ENCODE measurements at regions of chr16 and their contacts with region 1.

Region 1: DNA sequence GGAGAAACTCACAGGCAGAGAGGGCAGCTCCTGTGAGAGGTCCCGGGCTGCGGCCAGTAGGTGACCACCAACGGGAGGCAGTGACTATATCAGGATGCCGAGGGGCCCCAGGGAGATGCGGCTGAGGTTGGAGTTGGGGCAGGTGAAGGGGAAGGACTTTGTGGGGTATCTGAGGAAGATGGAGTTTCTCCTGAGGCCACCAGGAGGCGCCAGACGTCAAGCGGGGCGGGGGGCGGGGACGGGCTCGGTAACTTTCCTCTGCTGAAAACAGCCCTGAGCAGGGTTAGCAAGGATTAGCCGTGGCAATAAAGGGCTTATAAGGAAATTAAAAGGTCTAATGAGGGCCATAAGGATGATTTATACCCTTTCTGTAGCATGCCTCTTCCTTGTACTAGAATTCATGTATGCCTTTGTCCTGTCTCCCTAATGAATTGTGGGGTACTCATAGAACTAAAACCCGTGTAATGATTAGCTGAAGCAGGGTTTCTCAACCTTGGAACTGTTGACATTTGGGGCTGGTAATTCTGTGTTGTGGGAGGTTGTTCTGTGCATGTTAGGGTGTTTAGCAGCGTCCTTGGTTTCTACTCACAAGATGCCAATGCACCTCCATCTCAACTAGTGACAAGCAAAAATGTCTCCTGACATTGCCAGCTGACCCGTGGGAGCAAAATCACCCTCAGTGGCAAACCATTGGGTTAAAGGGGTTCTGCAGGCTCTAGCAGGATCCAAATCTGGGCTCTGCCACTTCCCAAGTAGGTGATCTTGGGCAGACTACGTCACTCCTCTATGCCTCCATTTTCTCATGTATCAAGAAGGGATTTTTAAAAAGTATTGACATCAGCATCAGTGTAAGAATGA is 74.8 kb upstream of the GRIN2A start:
- DNase-seq: peak; percentile 46
- H3K4me3 Mint-ChIP-seq: no peak overlapping the region
- H3K27ac Mint-ChIP-seq: no peak overlapping the region
- H3K4me1 Mint-ChIP-seq: peaks cover 11% of the 10 kb centered on the region
- H3K27me3 Mint-ChIP-seq: no peaks in the 10 kb centered on the region
- CTCF ChIP-seq: peak; percentile 81

Region 2: GRCh38 chr16:10122546-10122945 is 134.5 kb before region 1 on chr16:
- CTCF ChIA-PET with region 1: no interaction called
- POLR2A ChIA-PET with region 1: no interaction called
- intact Hi-C with region 1: no loop called
- DNase-seq: peak; percentile 9
- H3K4me3 Mint-ChIP-seq: no peak overlapping the region
- H3K27ac Mint-ChIP-seq: no peak overlapping the region
- H3K4me1 Mint-ChIP-seq: no peaks in the 10 kb centered on the region
- H3K27me3 Mint-ChIP-seq: no peaks in the 10 kb centered on the region
- CTCF ChIP-seq: no peak

Region 3: DNA sequence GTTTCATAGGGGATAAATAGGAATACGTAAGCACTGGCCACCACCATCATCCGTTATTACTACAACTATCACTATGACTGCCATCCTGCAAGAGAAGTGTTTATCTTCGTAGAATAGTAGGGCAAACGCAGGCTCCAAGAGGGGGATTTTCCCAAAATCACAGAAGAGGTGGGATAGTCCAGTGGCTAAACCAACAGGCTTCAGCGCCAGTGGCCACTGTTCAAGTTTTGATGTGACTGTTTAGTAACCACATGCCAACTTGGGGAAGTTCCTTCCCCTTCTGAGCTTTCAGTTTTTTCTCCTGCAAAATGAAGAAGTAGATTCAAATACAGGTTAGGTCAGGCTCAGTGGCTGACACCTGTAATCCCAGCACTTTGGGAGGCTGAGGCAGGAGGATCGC is 14.1 kb before region 1 on chr16:
- CTCF ChIA-PET with region 1: interaction called, 21 read pairs
- POLR2A ChIA-PET with region 1: no interaction called
- intact Hi-C with region 1: no loop called
- DNase-seq: no peak
- H3K4me3 Mint-ChIP-seq: no peak overlapping the region
- H3K27ac Mint-ChIP-seq: no peak overlapping the region
- H3K4me1 Mint-ChIP-seq: no peaks in the 10 kb centered on the region
- H3K27me3 Mint-ChIP-seq: peaks cover 11% of the 10 kb centered on the region
- CTCF ChIP-seq: no peak

Region 4: GRCh38 chr16:10269632-10270031 is 12.6 kb after region 1 on chr16:
- CTCF ChIA-PET with region 1: interaction called, 17 read pairs
- POLR2A ChIA-PET with region 1: no interaction called
- intact Hi-C with region 1: no loop called
- DNase-seq: no peak
- H3K4me3 Mint-ChIP-seq: no peak overlapping the region
- H3K27ac Mint-ChIP-seq: peak overlapping the region; percentile 41
- H3K4me1 Mint-ChIP-seq: peaks cover 13% of the 10 kb centered on the region
- H3K27me3 Mint-ChIP-seq: no peaks in the 10 kb centered on the region
- CTCF ChIP-seq: no peak

Region 5: DNA sequence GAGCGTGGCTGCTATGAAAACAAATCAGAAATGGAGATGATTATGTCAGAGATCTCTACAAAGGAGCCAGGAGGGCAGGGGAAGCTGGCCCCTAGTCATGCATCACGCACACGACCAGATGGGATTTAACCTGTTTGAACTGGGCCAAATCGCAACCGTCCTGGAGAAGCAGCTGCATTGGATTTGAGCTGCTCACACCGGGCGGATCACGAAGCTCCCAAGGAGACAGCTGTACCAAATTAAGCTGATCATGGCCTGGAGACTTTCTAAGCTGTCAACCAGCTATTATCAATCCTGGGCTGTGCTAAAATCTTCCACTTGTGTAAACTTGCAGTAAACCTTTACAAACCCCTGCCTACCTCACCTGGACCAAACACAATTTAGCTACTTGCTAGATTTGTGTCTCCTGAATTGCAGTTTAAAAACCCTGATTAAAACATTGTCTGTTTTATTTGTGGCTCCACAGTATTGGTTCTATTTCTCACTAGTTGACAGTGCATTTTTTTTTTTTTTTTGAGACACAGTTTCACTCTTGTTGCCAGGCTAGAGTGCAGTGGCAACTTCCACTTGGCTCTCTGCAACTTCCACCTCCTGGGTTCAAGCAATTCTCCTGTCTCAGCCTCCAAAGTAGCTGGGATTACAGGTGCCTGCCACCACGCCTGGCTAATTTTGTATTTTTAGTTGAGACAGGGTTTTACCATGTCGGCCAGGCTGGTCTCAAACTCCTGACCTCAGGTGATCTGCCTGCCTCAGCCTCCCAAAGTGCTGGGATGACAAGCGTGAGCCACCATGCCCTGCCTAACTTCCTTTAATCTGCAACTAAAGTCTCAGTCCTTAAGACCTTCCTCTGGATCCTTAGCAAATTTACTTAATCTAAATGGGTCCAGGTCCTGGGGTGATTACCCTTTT is 23.5 kb after region 1 on chr16:
- CTCF ChIA-PET with region 1: interaction called, 10 read pairs
- POLR2A ChIA-PET with region 1: no interaction called
- intact Hi-C with region 1: no loop called
- DNase-seq: no peak
- H3K4me3 Mint-ChIP-seq: no peak overlapping the region
- H3K27ac Mint-ChIP-seq: no peak overlapping the region
- H3K4me1 Mint-ChIP-seq: no peaks in the 10 kb centered on the region
- H3K27me3 Mint-ChIP-seq: no peaks in the 10 kb centered on the region
- CTCF ChIP-seq: no peak

Region 6: GRCh38 chr16:10308305-10309193 is 51.5 kb after region 1 on chr16:
- CTCF ChIA-PET with region 1: interaction called, 51 read pairs
- POLR2A ChIA-PET with region 1: no interaction called
- intact Hi-C with region 1: no loop called
- DNase-seq: peak; percentile 96
- H3K4me3 Mint-ChIP-seq: peak overlapping the region; percentile 12
- H3K27ac Mint-ChIP-seq: peak overlapping the region; percentile 62
- H3K4me1 Mint-ChIP-seq: peaks cover 13% of the 10 kb centered on the region
- H3K27me3 Mint-ChIP-seq: no peaks in the 10 kb centered on the region
- CTCF ChIP-seq: no peak

Region 7: DNA sequence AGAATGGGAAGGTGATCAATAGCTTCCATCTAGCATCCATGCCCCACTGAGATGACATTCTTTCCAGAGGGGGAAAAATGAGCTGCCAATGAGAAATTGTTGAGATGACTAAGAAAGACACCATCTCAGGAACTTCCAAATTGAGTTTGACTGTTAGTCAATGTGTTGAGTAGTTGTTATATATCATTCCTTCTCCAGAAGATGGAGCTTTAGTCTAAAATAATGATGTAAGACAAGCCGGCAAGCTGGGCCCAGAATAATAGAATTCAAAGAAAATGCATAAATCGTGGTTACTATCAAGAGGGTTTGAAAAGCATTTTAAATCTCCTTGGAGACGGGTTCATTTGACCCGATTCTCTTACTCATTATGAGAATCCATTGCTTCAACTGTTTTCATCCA is 57.8 kb after region 1 on chr16:
- CTCF ChIA-PET with region 1: interaction called, 51 read pairs
- POLR2A ChIA-PET with region 1: no interaction called
- intact Hi-C with region 1: loop called (anchors 1 kb)
- DNase-seq: peak; percentile 25
- H3K4me3 Mint-ChIP-seq: no peak overlapping the region
- H3K27ac Mint-ChIP-seq: no peak overlapping the region
- H3K4me1 Mint-ChIP-seq: no peaks in the 10 kb centered on the region
- H3K27me3 Mint-ChIP-seq: no peaks in the 10 kb centered on the region
- CTCF ChIP-seq: peak; percentile 35

Region 8: GRCh38 chr16:10356870-10357842 is 100.1 kb after region 1 on chr16:
- CTCF ChIA-PET with region 1: no interaction called
- POLR2A ChIA-PET with region 1: no interaction called
- intact Hi-C with region 1: no loop called
- DNase-seq: no peak
- H3K4me3 Mint-ChIP-seq: no peak overlapping the region
- H3K27ac Mint-ChIP-seq: no peak overlapping the region
- H3K4me1 Mint-ChIP-seq: no peaks in the 10 kb centered on the region
- H3K27me3 Mint-ChIP-seq: no peaks in the 10 kb centered on the region
- CTCF ChIP-seq: no peak

Region 9: DNA sequence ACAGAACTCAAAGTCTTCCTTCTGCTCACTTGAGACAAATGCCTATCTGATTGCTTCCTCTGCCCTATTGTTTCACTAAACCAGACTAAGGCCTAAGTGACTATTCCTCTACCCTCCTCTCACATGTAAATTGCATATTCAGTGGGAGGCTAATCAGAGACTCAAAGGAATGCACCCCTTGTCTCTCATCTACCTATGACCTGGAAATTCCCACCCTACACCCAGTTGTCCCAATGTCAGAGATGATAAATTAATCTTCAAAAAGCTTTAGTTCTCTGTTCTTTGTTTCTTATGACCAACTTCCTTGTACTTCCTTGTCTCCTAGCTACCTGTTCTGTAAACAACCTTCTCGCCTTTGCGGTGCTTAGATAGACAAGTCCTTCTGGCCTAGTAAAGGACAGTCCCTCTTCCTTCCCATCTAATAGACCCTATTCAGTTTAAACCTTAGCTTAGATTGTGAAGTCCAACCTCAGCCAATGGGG is 247.4 kb after region 1 on chr16:
- CTCF ChIA-PET with region 1: interaction called, 48 read pairs
- POLR2A ChIA-PET with region 1: interaction called, 3 read pairs
- intact Hi-C with region 1: loop called (anchors 1 kb)
- DNase-seq: no peak
- H3K4me3 Mint-ChIP-seq: no peak overlapping the region
- H3K27ac Mint-ChIP-seq: peak overlapping the region; percentile 32
- H3K4me1 Mint-ChIP-seq: peaks cover 6% of the 10 kb centered on the region
- H3K27me3 Mint-ChIP-seq: no peaks in the 10 kb centered on the region
- CTCF ChIP-seq: no peak

Measured in MCF 10A (cell line).